ENCODE measurements at regions of chr19 and their contacts with region 1.

Region 1: GRCh38 chr19:8444645-8445487 is at the start of gene HNRNPM:
- DNase-seq: peak; percentile 99 to 100 (median 100)
- ATAC-seq: peak; percentile 93
- H3K4me3 ChIP-seq: peak within 1 kb of the TSS; percentile 69 to 81
- H3K4me3 Mint-ChIP-seq: peak within 1 kb of the TSS; percentile 97
- H3K27ac ChIP-seq: peak within 1 kb of the TSS; percentile 93 to 96
- H3K27ac Mint-ChIP-seq: peak within 1 kb of the TSS; percentile 98
- H3K4me1 ChIP-seq: peaks cover 34% of the 10 kb centered on the region
- H3K4me1 Mint-ChIP-seq: peaks cover 40% of the 10 kb centered on the region
- H3K27me3 ChIP-seq: no peaks in the 10 kb centered on the region
- H3K27me3 Mint-ChIP-seq: no peaks in the 10 kb centered on the region
- CTCF ChIP-seq: no peak
- total RNA-seq, gene HNRNPM: 268 to 278 TPM

Region 2: DNA sequence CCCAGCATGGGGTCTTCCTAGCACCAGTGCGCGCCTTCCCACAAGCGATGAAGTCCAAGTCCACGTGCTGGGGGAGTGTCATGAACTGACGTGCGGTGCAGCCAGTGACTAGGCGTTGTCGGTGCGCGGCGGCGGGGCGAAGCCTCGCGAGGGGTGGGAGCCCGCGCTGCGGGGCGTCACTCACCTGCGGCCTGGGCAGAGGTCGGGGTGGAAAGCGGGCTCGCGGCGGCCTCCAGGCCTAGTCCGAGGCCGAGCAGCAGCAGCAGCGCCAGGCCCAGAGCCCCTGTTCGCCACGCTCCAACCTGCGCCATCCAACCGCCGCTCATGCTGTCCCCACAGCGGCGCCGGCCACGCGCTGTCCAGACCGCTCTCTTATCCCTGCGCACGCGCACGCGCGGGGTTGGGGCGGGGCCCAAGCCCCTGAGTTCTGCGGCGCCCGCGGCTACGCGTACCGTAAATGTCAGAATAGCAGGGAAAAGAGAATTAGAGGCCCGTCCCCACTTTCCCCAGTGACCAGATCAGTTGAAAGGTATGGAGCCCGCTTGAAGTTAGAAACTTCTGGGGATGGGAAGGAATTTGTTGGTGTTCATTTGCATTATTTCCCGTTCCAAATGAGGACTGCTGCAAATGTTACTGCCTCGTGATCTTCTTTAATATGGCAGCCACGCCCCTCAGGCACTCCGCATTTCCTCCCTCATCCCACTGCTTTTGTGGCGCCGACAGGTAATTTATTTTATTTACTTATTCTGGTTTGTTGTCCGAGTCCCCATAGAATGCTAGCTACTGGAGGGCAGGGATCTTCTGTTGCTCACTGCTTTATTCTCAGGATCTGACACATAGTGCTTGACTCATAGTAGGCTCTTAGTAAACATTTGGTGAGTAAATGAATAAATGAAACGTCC is 136.7 kb before region 1 on chr19 and contains the start of gene CD320:
- CTCF ChIA-PET with region 1: no interaction called
- POLR2A ChIA-PET with region 1: interaction called, 3 read pairs
- intact Hi-C with region 1: loop called in 1 of 2 experiments (anchors 1 kb)
- DNase-seq: peak; percentile 71 to 92 (median 86)
- ATAC-seq: peak; percentile 93
- H3K4me3 ChIP-seq: peak within 1 kb of the TSS; percentile 63 to 64
- H3K4me3 Mint-ChIP-seq: peak within 1 kb of the TSS; percentile 91
- H3K27ac ChIP-seq: peak within 1 kb of the TSS; percentile 64 to 71
- H3K27ac Mint-ChIP-seq: peak within 1 kb of the TSS; percentile 94
- H3K4me1 ChIP-seq: peaks cover 29% of the 10 kb centered on the region
- H3K4me1 Mint-ChIP-seq: peaks cover 31% of the 10 kb centered on the region
- H3K27me3 ChIP-seq: no peaks in the 10 kb centered on the region
- H3K27me3 Mint-ChIP-seq: no peaks in the 10 kb centered on the region
- CTCF ChIP-seq: no peak
- total RNA-seq, gene CD320: 15.7 to 19.1 TPM

Region 3: GRCh38 chr19:8321060-8321985 is 123.5 kb before region 1 on chr19 and contains the starts of genes NDUFA7 and RPS28:
- CTCF ChIA-PET with region 1: no interaction called
- POLR2A ChIA-PET with region 1: no interaction called
- intact Hi-C with region 1: loop called in 1 of 2 experiments (anchors 1 kb)
- DNase-seq: peak; percentile 94 to 99 (median 97)
- ATAC-seq: peak; percentile 93
- H3K4me3 ChIP-seq: peak within 1 kb of the TSS; percentile 81 to 98
- H3K4me3 Mint-ChIP-seq: peak within 1 kb of the TSS; percentile 96
- H3K27ac ChIP-seq: peak within 1 kb of the TSS; percentile 90 to 96
- H3K27ac Mint-ChIP-seq: peak within 1 kb of the TSS; percentile 97
- H3K4me1 ChIP-seq: peaks cover 26% of the 10 kb centered on the region
- H3K4me1 Mint-ChIP-seq: peaks cover 37% of the 10 kb centered on the region
- H3K27me3 ChIP-seq: no peaks in the 10 kb centered on the region
- H3K27me3 Mint-ChIP-seq: no peaks in the 10 kb centered on the region
- CTCF ChIP-seq: no peak
- total RNA-seq, gene NDUFA7: 19.8 to 28.9 TPM
- total RNA-seq, gene RPS28: 3,224 to 3,257 TPM

Region 4: DNA sequence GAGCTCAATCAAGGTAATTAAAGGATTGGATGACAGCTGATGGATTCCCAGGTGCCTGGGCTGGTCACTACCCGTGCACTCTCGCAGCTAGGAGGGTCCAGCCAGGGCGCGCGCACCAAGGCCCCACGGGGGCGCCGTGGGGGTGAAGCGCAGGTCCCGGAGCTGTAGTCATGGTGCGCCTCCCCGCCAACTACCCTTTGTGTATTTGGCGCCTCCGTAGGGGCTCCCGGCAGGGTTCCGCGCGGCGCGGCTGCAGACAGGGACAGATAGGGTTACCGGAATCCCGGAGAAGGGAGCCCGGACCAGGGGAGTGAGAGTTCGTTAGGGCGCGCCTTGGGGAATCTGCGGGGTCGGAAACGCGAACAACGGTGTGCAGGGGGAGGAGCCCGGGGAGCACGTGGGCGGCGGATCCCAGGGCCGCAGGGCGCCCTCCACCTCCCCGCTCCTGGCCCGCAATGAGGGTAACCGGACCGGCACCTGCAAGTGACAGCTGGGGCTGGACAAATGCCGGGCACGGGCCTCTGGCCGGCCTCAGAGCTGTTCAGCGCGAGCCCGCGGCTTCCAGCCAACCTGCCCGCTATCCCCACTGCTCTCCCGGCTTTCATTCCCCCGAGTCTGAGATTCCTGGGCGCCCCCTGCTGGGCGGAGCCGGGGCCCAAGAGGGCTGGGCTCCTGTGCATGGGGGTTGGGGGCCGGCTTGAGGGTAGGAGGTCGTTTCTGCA is 61.0 kb after region 1 on chr19:
- CTCF ChIA-PET with region 1: interaction called, 3 read pairs
- POLR2A ChIA-PET with region 1: no interaction called
- intact Hi-C with region 1: loop called in 1 of 2 experiments (anchors 1 kb)
- DNase-seq: peak in 8 of 9 experiments; percentile 54 to 85 (median 70)
- ATAC-seq: peak; percentile 78
- H3K4me3 ChIP-seq: peak overlapping the region; percentile 58 to 83
- H3K4me3 Mint-ChIP-seq: peak overlapping the region; percentile 91
- H3K27ac ChIP-seq: peak overlapping the region; percentile 32 to 43
- H3K27ac Mint-ChIP-seq: peak overlapping the region; percentile 87
- H3K4me1 ChIP-seq: peaks cover 19% of the 10 kb centered on the region
- H3K4me1 Mint-ChIP-seq: peaks cover 19% of the 10 kb centered on the region
- H3K27me3 ChIP-seq: no peaks in the 10 kb centered on the region
- H3K27me3 Mint-ChIP-seq: no peaks in the 10 kb centered on the region
- CTCF ChIP-seq: peak; percentile 45

Region 5: GRCh38 chr19:8832132-8833021 is 387.5 kb after region 1 on chr19 and contains the starts of genes MBD3L1 and ZNF558:
- CTCF ChIA-PET with region 1: no interaction called
- POLR2A ChIA-PET with region 1: no interaction called
- intact Hi-C with region 1: loop called in 1 of 2 experiments (anchors 2 kb)
- DNase-seq: peak; percentile 97 to 100 (median 99)
- ATAC-seq: peak; percentile 89
- H3K4me3 ChIP-seq: peak within 1 kb of the TSS; percentile 86 to 93
- H3K4me3 Mint-ChIP-seq: peak within 1 kb of the TSS; percentile 92
- H3K27ac ChIP-seq: peak within 1 kb of the TSS; percentile 91
- H3K27ac Mint-ChIP-seq: peak within 1 kb of the TSS; percentile 96
- H3K4me1 ChIP-seq: peaks cover 13% of the 10 kb centered on the region
- H3K4me1 Mint-ChIP-seq: peaks cover 27% of the 10 kb centered on the region
- H3K27me3 ChIP-seq: no peaks in the 10 kb centered on the region
- H3K27me3 Mint-ChIP-seq: no peaks in the 10 kb centered on the region
- CTCF ChIP-seq: no peak
- total RNA-seq, gene MBD3L1: not detected
- total RNA-seq, gene ZNF558: 28.1 to 32.9 TPM